HEK293 (cell line): ENCODE measurements at regions of chr7 and their contacts with region 1.

Region 1: GRCh38 chr7:129218514-129219062 is 6.2 kb upstream of the AHCYL2 start:
- H3K4me3 ChIP-seq: no peak overlapping the region
- H3K27ac ChIP-seq: no peak overlapping the region
- H3K4me1 ChIP-seq: no peaks in the 10 kb centered on the region
- CTCF ChIP-seq: peak; percentile 87

Region 2: GRCh38 chr7:129262324-129262723 is 43.7 kb after region 1 on chr7:
- CTCF ChIA-PET with region 1: interaction called, 13 read pairs
- POLR2A ChIA-PET with region 1: no interaction called
- H3K4me3 ChIP-seq: no peak overlapping the region
- H3K27ac ChIP-seq: no peak overlapping the region
- H3K4me1 ChIP-seq: peaks cover 11% of the 10 kb centered on the region; the same call in 1 of the 2 replicates
- CTCF ChIP-seq: no peak

Region 3: GRCh38 chr7:129285111-129285510 is 66.5 kb after region 1 on chr7:
- CTCF ChIA-PET with region 1: interaction called, 34 read pairs
- POLR2A ChIA-PET with region 1: no interaction called
- H3K4me3 ChIP-seq: no peak overlapping the region
- H3K27ac ChIP-seq: no peak overlapping the region
- H3K4me1 ChIP-seq: no peaks in the 10 kb centered on the region
- CTCF ChIP-seq: no peak

Region 4: DNA sequence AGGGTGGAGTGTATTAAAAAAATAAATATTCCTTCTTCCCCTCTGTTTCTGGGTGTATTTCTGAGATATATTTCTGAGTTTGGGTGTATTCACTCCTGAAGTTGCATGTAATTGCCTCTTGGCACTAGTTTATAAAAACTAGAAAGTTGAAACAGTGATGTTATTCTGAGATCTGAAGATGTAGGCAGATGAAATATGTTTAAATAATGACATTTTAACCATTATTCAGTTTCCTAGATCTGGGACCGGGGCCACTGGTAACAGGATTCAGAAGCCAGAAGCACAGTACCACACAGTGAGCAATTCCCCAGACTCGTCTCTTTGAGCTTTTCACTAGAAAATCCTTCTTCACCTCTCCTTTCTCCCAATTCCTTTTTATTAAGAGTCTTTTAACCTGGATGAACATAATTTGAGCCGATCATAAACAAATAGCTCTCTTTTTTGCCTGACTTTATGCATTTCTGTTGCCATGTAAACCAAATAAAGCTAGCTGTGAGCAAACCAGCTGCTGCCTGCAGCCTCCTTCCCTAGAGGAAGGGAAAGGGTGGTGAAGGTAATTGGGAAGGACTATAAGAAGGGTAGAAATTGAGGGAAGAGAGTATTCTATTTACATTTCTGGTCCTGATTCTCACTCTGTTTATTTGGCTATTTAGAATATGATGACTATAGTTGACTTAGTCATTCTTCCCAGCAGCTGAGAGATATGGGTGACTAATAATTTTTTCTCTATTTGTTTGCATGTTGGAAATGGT is 113.9 kb after region 1 on chr7:
- CTCF ChIA-PET with region 1: interaction called, 13 read pairs
- POLR2A ChIA-PET with region 1: no interaction called
- H3K4me3 ChIP-seq: no peak overlapping the region
- H3K27ac ChIP-seq: no peak overlapping the region
- H3K4me1 ChIP-seq: no peaks in the 10 kb centered on the region
- CTCF ChIP-seq: no peak

Region 5: GRCh38 chr7:129367700-129368388 is 149.3 kb after region 1 on chr7:
- CTCF ChIA-PET with region 1: interaction called, 22 read pairs
- POLR2A ChIA-PET with region 1: interaction called, 3 read pairs
- H3K4me3 ChIP-seq: no peak overlapping the region
- H3K27ac ChIP-seq: no peak overlapping the region
- H3K4me1 ChIP-seq: 0 out of 2 replicates have a peak, but pooled peaks cover 4% of the 10 kb centered on the region
- CTCF ChIP-seq: peak; percentile 67

Region 6: DNA sequence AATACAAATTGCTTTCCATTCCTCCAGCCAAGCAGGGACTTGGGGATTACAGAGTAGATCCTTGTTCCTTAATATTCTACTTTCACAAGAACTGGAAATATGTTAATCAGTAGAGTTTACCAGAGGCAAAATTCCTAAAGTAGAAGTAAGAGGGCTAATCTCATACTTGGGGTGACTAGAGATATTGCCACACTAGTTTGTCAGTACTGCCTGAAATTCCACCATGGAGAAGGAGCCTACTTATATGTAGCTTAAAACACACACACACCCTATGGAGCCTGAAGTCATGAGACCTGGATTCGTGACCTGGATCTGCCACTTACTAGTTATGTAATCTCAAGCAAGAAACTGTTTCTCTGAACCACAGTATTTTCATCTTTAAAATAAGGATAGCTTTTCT is 249.5 kb after region 1 on chr7:
- CTCF ChIA-PET with region 1: interaction called, 47 read pairs
- POLR2A ChIA-PET with region 1: no interaction called
- H3K4me3 ChIP-seq: no peak overlapping the region
- H3K27ac ChIP-seq: no peak overlapping the region
- H3K4me1 ChIP-seq: no peaks in the 10 kb centered on the region
- CTCF ChIP-seq: no peak